CD8-positive, alpha-beta T cell (primary cell): ENCODE measurements at regions of chr3 and their contacts with region 1.

Region 1: DNA sequence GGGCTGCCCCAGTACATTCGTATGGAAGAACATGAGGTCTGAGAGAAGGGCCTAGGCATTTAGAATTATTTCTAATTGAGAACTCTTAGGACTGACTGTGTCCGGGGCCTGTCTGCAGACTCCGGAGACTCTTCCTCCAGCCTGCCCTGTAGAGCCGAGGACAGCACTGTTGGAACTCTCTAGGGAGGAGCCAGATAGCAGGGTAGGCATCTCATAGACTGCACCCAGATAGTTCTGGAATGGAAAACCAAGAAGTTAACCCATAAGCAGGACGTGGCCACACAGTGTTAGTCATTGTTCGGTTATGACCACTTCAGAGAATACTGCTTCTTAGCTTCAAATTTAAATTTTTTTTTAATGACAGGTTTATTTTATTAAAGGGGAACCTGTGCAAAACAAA is 59.5 kb downstream of the SNRK start:
- DNase-seq: peak in 2 of 9 experiments; percentile 32 to 48
- ATAC-seq: peak; percentile 16
- H3K4me3 ChIP-seq: no peak overlapping the region
- H3K4me3 Mint-ChIP-seq: peak overlapping the region; percentile 36
- H3K27ac ChIP-seq: peak overlapping the region; percentile 81 to 91
- H3K27ac Mint-ChIP-seq: peak overlapping the region; percentile 97
- H3K4me1 ChIP-seq: peaks cover 82% of the 10 kb centered on the region
- H3K4me1 Mint-ChIP-seq: peaks cover 84% of the 10 kb centered on the region
- H3K27me3 ChIP-seq: no peaks in the 10 kb centered on the region
- H3K27me3 Mint-ChIP-seq: no peaks in the 10 kb centered on the region
- CTCF ChIP-seq: no peak

Region 2: GRCh38 chr3:43223670-43224364 is 122.1 kb before region 1 on chr3:
- CTCF ChIA-PET with region 1: interaction called, 13 read pairs
- POLR2A ChIA-PET with region 1: interaction called, 3 read pairs
- intact Hi-C with region 1: loop called in 1 of 2 experiments (anchors 10 kb)
- DNase-seq: peak in 2 of 9 experiments; percentile 50 to 58
- ATAC-seq: peak; percentile 30
- H3K4me3 ChIP-seq: no peak overlapping the region
- H3K4me3 Mint-ChIP-seq: no peak overlapping the region
- H3K27ac ChIP-seq: no peak overlapping the region
- H3K27ac Mint-ChIP-seq: peak overlapping the region; percentile 81
- H3K4me1 ChIP-seq: peaks cover 58% of the 10 kb centered on the region
- H3K4me1 Mint-ChIP-seq: peaks cover 64% of the 10 kb centered on the region
- H3K27me3 ChIP-seq: no peaks in the 10 kb centered on the region
- H3K27me3 Mint-ChIP-seq: no peaks in the 10 kb centered on the region
- CTCF ChIP-seq: peak; percentile 78

Region 3: GRCh38 chr3:43260412-43260811 is 85.5 kb before region 1 on chr3:
- CTCF ChIA-PET with region 1: no interaction called
- POLR2A ChIA-PET with region 1: no interaction called
- intact Hi-C with region 1: no loop called
- DNase-seq: no peak
- ATAC-seq: no peak
- H3K4me3 ChIP-seq: no peak overlapping the region
- H3K4me3 Mint-ChIP-seq: no peak overlapping the region
- H3K27ac ChIP-seq: no peak overlapping the region
- H3K27ac Mint-ChIP-seq: no peak overlapping the region
- H3K4me1 ChIP-seq: peaks cover 6% of the 10 kb centered on the region
- H3K4me1 Mint-ChIP-seq: peaks cover 27% of the 10 kb centered on the region
- H3K27me3 ChIP-seq: no peaks in the 10 kb centered on the region
- H3K27me3 Mint-ChIP-seq: no peaks in the 10 kb centered on the region
- CTCF ChIP-seq: no peak

Region 4: DNA sequence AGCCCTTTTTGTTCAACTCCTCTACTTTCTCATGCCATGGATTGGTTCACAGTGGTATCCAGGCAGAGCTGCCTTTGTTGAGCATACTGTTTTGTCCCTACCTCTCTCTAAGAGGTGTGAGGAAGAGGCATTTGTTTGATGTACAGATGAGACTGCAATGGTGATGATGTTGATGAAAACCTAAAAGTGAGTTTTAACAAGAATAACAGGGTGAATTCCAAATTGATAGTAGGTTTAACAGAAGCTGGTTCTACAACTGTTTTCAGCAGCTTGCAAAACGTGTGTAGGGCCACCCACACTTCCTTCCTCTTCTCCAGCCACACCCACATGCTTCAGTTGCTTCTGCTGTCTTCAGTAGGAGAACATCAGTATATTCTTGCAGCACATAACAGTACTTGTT is 49.3 kb before region 1 on chr3:
- CTCF ChIA-PET with region 1: interaction called, 25 read pairs
- POLR2A ChIA-PET with region 1: interaction called, 86 read pairs
- intact Hi-C with region 1: loop called in 1 of 2 experiments (anchors 2 kb)
- DNase-seq: peak; percentile 22 to 92 (median 68)
- ATAC-seq: peak; percentile 88
- H3K4me3 ChIP-seq: peak overlapping the region; percentile 30 to 45
- H3K4me3 Mint-ChIP-seq: peak overlapping the region; percentile 87
- H3K27ac ChIP-seq: peak overlapping the region; percentile 57 to 87
- H3K27ac Mint-ChIP-seq: peak overlapping the region; percentile 96
- H3K4me1 ChIP-seq: peaks cover 89% of the 10 kb centered on the region
- H3K4me1 Mint-ChIP-seq: peaks cover 85% of the 10 kb centered on the region
- H3K27me3 ChIP-seq: no peaks in the 10 kb centered on the region
- H3K27me3 Mint-ChIP-seq: no peaks in the 10 kb centered on the region
- CTCF ChIP-seq: no peak

Region 5: GRCh38 chr3:43334976-43335375 is 10.9 kb before region 1 on chr3:
- CTCF ChIA-PET with region 1: interaction called, 13 read pairs
- POLR2A ChIA-PET with region 1: interaction called, 9 read pairs
- intact Hi-C with region 1: no loop called
- DNase-seq: no peak
- ATAC-seq: no peak
- H3K4me3 ChIP-seq: no peak overlapping the region
- H3K4me3 Mint-ChIP-seq: no peak overlapping the region
- H3K27ac ChIP-seq: no peak overlapping the region
- H3K27ac Mint-ChIP-seq: no peak overlapping the region
- H3K4me1 ChIP-seq: peaks cover 22% of the 10 kb centered on the region
- H3K4me1 Mint-ChIP-seq: peaks cover 35% of the 10 kb centered on the region
- H3K27me3 ChIP-seq: no peaks in the 10 kb centered on the region
- H3K27me3 Mint-ChIP-seq: no peaks in the 10 kb centered on the region
- CTCF ChIP-seq: no peak

Region 6: DNA sequence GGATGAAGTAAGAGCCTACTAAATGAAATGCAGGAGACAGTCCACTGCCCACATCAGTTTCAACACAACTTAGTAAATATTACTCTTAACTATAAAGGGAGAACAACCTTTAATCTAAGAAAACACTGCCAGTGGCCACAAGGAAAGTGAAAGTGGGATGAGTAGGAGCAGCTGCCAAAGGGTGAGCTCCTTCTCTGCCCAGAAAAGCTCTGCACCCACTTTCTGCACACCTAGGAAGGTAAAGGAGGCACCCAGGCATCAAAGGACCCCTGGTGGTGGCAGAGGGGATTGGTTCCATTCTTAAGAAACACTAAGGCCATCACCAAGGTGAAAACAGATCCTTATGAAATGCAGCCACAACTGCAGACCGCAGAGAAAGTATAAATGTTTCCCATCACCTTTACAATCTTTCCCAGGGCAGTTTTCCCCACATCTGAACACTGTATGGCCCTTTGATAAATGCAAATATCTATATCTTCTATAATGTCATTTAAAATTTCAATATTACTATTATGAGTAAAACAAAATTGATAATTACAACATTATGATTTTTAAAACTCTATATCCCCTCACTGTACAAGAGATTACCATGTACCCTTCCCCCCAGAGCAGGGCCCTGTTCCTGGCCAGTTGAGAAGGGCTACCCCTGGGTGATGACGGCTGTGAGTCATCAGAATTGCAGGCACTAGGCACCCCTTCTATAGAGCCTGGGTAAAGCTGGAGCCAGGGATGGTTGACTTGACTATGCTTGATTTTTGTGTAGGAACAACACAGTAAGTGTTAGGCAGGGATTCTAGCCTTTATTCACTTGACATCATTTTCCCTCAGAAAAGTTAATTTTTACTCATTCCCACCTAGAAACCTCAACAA is 32.4 kb after region 1 on chr3:
- CTCF ChIA-PET with region 1: interaction called, 9 read pairs
- POLR2A ChIA-PET with region 1: interaction called, 4 read pairs
- intact Hi-C with region 1: loop called in 1 of 2 experiments (anchors 2 kb)
- DNase-seq: peak; percentile 54 to 87 (median 78)
- ATAC-seq: peak; percentile 99
- H3K4me3 ChIP-seq: no peak overlapping the region
- H3K4me3 Mint-ChIP-seq: no peak overlapping the region
- H3K27ac ChIP-seq: no peak overlapping the region
- H3K27ac Mint-ChIP-seq: peak overlapping the region; percentile 72
- H3K4me1 ChIP-seq: peaks cover 16% of the 10 kb centered on the region
- H3K4me1 Mint-ChIP-seq: peaks cover 31% of the 10 kb centered on the region
- H3K27me3 ChIP-seq: no peaks in the 10 kb centered on the region
- H3K27me3 Mint-ChIP-seq: no peaks in the 10 kb centered on the region
- CTCF ChIP-seq: peak; percentile 79

Region 7: GRCh38 chr3:43503067-43503728 is 157.3 kb after region 1 on chr3:
- CTCF ChIA-PET with region 1: interaction called, 18 read pairs
- POLR2A ChIA-PET with region 1: interaction called, 21 read pairs
- intact Hi-C with region 1: loop called in 1 of 2 experiments (anchors 10 kb)
- DNase-seq: peak in 2 of 9 experiments; percentile 57 to 72
- ATAC-seq: peak; percentile 60
- H3K4me3 ChIP-seq: no peak overlapping the region
- H3K4me3 Mint-ChIP-seq: no peak overlapping the region
- H3K27ac ChIP-seq: no peak overlapping the region
- H3K27ac Mint-ChIP-seq: no peak overlapping the region
- H3K4me1 ChIP-seq: peaks cover 42% of the 10 kb centered on the region
- H3K4me1 Mint-ChIP-seq: peaks cover 54% of the 10 kb centered on the region
- H3K27me3 ChIP-seq: no peaks in the 10 kb centered on the region
- H3K27me3 Mint-ChIP-seq: no peaks in the 10 kb centered on the region
- CTCF ChIP-seq: peak; percentile 65